ENCODE measurements at regions of chr2 and their contacts with region 1.

Region 1: GRCh38 chr2:54957321-54957999 is 92.8 kb downstream of the RTN4 start:
- DNase-seq: no peak
- ATAC-seq: no peak
- H3K4me3 ChIP-seq: no peak overlapping the region
- H3K4me3 Mint-ChIP-seq: no peak overlapping the region
- H3K27ac ChIP-seq: no peak overlapping the region
- H3K27ac Mint-ChIP-seq: no peak overlapping the region
- H3K4me1 ChIP-seq: no peaks in the 10 kb centered on the region
- H3K4me1 Mint-ChIP-seq: no peaks in the 10 kb centered on the region
- H3K27me3 ChIP-seq: no peaks in the 10 kb centered on the region
- H3K27me3 Mint-ChIP-seq: no peaks in the 10 kb centered on the region
- CTCF ChIP-seq: no peak

Region 2: GRCh38 chr2:54834721-54835120 is 122.7 kb before region 1 on chr2:
- CTCF ChIA-PET with region 1: no interaction called
- POLR2A ChIA-PET with region 1: no interaction called
- intact Hi-C with region 1: no loop called
- DNase-seq: no peak
- ATAC-seq: no peak
- H3K4me3 ChIP-seq: no peak overlapping the region
- H3K4me3 Mint-ChIP-seq: no peak overlapping the region
- H3K27ac ChIP-seq: no peak overlapping the region
- H3K27ac Mint-ChIP-seq: no peak overlapping the region
- H3K4me1 ChIP-seq: peaks cover 0 to 4% of the 10 kb centered on the region in 2 donors
- H3K4me1 Mint-ChIP-seq: peaks cover 4% of the 10 kb centered on the region
- H3K27me3 ChIP-seq: no peaks in the 10 kb centered on the region
- H3K27me3 Mint-ChIP-seq: no peaks in the 10 kb centered on the region
- CTCF ChIP-seq: no peak

Region 3: DNA sequence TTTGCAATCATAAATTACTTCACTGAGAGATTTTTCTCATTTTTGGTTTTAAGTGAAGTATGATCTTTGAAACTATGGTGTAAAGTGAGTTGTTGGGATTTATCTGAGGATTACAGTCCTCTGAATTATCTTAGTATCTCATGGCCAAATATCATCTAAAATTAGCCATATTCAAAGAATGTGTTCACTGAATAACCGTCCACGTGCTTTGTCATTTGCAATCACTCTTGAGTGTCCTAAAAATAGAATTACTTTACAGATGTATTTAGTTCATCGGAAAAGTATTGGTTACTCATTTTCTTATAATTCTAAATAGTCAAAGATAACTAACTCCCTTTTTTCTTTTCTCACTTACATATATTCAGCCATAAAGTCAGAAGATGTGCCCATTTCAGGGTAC is 48.5 kb before region 1 on chr2:
- CTCF ChIA-PET with region 1: no interaction called
- POLR2A ChIA-PET with region 1: interaction called, 10 read pairs
- intact Hi-C with region 1: no loop called
- DNase-seq: no peak
- ATAC-seq: no peak
- H3K4me3 ChIP-seq: no peak overlapping the region
- H3K4me3 Mint-ChIP-seq: no peak overlapping the region
- H3K27ac ChIP-seq: no peak overlapping the region
- H3K27ac Mint-ChIP-seq: no peak overlapping the region
- H3K4me1 ChIP-seq: no peaks in the 10 kb centered on the region
- H3K4me1 Mint-ChIP-seq: no peaks in the 10 kb centered on the region
- H3K27me3 ChIP-seq: no peaks in the 10 kb centered on the region
- H3K27me3 Mint-ChIP-seq: no peaks in the 10 kb centered on the region
- CTCF ChIP-seq: no peak

Region 4: GRCh38 chr2:54942373-54942772 is 15.1 kb before region 1 on chr2:
- CTCF ChIA-PET with region 1: no interaction called
- POLR2A ChIA-PET with region 1: no interaction called
- intact Hi-C with region 1: no loop called
- DNase-seq: no peak
- ATAC-seq: no peak
- H3K4me3 ChIP-seq: no peak overlapping the region
- H3K4me3 Mint-ChIP-seq: no peak overlapping the region
- H3K27ac ChIP-seq: no peak overlapping the region
- H3K27ac Mint-ChIP-seq: no peak overlapping the region
- H3K4me1 ChIP-seq: no peaks in the 10 kb centered on the region
- H3K4me1 Mint-ChIP-seq: no peaks in the 10 kb centered on the region
- H3K27me3 ChIP-seq: no peaks in the 10 kb centered on the region
- H3K27me3 Mint-ChIP-seq: no peaks in the 10 kb centered on the region
- CTCF ChIP-seq: no peak